ENCODE measurements at regions of chr1 and their contacts with region 1.

Region 1: GRCh38 chr1:205658943-205659581 is 21.2 kb downstream of the SLC45A3 start:
- DNase-seq: peak; percentile 85
- ATAC-seq: peak; percentile 93
- H3K4me3 Mint-ChIP-seq: no peak overlapping the region
- H3K27ac Mint-ChIP-seq: no peak overlapping the region
- H3K4me1 Mint-ChIP-seq: peaks cover 3% of the 10 kb centered on the region
- H3K27me3 Mint-ChIP-seq: peaks cover 3% of the 10 kb centered on the region

Region 2: DNA sequence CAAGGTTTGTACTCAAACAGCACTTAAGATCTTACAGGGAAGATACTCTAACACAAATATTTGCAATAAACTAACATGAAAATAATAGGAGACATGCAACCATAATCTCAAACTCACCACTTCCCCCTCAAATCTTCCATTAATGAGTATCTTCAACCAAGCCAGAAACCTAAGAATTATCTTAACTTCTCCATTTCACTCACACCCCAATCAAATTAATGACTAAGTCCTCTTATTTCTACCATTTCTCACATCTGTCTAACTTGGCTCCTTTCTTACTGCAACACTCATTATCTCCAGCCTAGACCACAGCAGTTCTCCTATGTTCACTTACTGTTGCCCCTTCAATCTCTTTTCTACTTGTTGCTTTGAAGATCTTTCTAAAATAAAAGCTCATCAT is 547.7 kb before region 1 on chr1:
- CTCF ChIA-PET with region 1: no interaction called
- DNase-seq: no peak
- ATAC-seq: no peak
- H3K4me3 Mint-ChIP-seq: no peak overlapping the region
- H3K27ac Mint-ChIP-seq: peak overlapping the region; percentile 9
- H3K4me1 Mint-ChIP-seq: peaks cover 18% of the 10 kb centered on the region
- H3K27me3 Mint-ChIP-seq: no peaks in the 10 kb centered on the region

Region 3: GRCh38 chr1:205528887-205529825 is 129.9 kb before region 1 on chr1:
- CTCF ChIA-PET with region 1: interaction called, 107 read pairs
- DNase-seq: peak; percentile 82
- ATAC-seq: peak; percentile 85
- H3K4me3 Mint-ChIP-seq: no peak overlapping the region
- H3K27ac Mint-ChIP-seq: no peak overlapping the region
- H3K4me1 Mint-ChIP-seq: peaks cover 3% of the 10 kb centered on the region
- H3K27me3 Mint-ChIP-seq: peaks cover 7% of the 10 kb centered on the region

Region 4: GRCh38 chr1:205591522-205592351 is 67.3 kb before region 1 on chr1:
- CTCF ChIA-PET with region 1: interaction called, 465 read pairs
- DNase-seq: peak; percentile 91
- ATAC-seq: peak; percentile 95
- H3K4me3 Mint-ChIP-seq: peak overlapping the region; percentile 82
- H3K27ac Mint-ChIP-seq: peak overlapping the region; percentile 85
- H3K4me1 Mint-ChIP-seq: peaks cover 26% of the 10 kb centered on the region
- H3K27me3 Mint-ChIP-seq: no peaks in the 10 kb centered on the region

Region 5: GRCh38 chr1:205678286-205679111 is 19.4 kb after region 1 on chr1:
- CTCF ChIA-PET with region 1: interaction called, 70 read pairs
- DNase-seq: no peak
- ATAC-seq: no peak
- H3K4me3 Mint-ChIP-seq: no peak overlapping the region
- H3K27ac Mint-ChIP-seq: no peak overlapping the region
- H3K4me1 Mint-ChIP-seq: peaks cover 12% of the 10 kb centered on the region
- H3K27me3 Mint-ChIP-seq: peaks cover 30% of the 10 kb centered on the region

Region 6: DNA sequence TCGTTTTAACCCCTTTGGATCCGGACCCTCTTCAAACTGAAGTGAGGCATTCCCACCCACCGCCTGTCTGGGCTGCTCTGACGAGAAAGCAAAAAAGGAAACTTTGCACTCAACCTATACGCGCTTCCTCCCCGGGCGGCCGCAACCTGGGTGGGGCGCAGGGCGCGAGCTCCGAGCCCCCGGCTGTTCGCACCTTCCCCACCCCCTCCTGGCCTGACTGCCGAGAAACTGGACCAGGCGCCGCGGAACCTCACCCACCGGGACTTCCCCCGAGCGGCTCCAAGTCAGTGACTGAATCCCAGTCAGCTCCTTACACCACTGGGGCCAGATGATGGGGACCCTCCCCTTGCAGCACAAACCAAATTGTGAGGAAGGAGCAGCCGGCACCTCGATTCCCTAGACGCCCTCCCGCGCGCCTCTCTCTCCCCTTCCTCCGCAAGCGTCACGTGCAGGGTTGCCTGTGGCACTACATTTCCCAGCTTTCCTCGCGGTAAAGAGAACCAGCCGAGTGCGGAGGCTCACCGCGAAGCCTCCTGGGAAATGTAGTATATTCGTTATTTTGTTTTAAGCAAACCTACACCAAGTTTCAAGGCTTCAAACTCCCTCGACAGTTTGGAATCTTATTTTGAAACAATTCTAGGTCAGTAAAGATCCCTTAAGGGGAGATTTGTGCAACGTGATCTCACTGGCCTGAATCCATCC is 116.1 kb after region 1 on chr1 and contains the start of gene RAB29:
- CTCF ChIA-PET with region 1: interaction called, 47 read pairs
- DNase-seq: peak; percentile 94
- ATAC-seq: peak; percentile 94
- H3K4me3 Mint-ChIP-seq: peak within 1 kb of the TSS; percentile 89
- H3K27ac Mint-ChIP-seq: peak within 1 kb of the TSS; percentile 93
- H3K4me1 Mint-ChIP-seq: peaks cover 46% of the 10 kb centered on the region
- H3K27me3 Mint-ChIP-seq: no peaks in the 10 kb centered on the region
- total RNA-seq, gene RAB29: 51.0 to 61.4 TPM

Region 7: GRCh38 chr1:205919026-205919746 is 260.1 kb after region 1 on chr1:
- CTCF ChIA-PET with region 1: interaction called, 18 read pairs
- DNase-seq: peak; percentile 78
- ATAC-seq: peak; percentile 81
- H3K4me3 Mint-ChIP-seq: no peak overlapping the region
- H3K27ac Mint-ChIP-seq: no peak overlapping the region
- H3K4me1 Mint-ChIP-seq: peaks cover 6% of the 10 kb centered on the region
- H3K27me3 Mint-ChIP-seq: peaks cover 3% of the 10 kb centered on the region